WTC11 (cell line): ENCODE measurements at regions of chr11 and their contacts with region 1.

Region 1: GRCh38 chr11:7513234-7514098 is at the start of gene PPFIBP2:
- DNase-seq: peak; percentile 83
- ATAC-seq: peak; percentile 83
- H3K4me3 Mint-ChIP-seq: peak within 1 kb of the TSS; percentile 83
- H3K27ac Mint-ChIP-seq: peak within 1 kb of the TSS; percentile 63
- H3K4me1 Mint-ChIP-seq: peaks cover 41% of the 10 kb centered on the region
- H3K27me3 Mint-ChIP-seq: peaks cover 24% of the 10 kb centered on the region
- CTCF ChIP-seq: no peak
- total RNA-seq, gene PPFIBP2: 12.5 to 21.4 TPM (median 12.9 TPM) in 3 replicates

Region 2: GRCh38 chr11:7694235-7694634 is 180.8 kb after region 1 on chr11:
- CTCF ChIA-PET with region 1: interaction called, 14 read pairs
- POLR2A ChIA-PET with region 1: no interaction called
- DNase-seq: no peak
- ATAC-seq: no peak
- H3K4me3 Mint-ChIP-seq: no peak overlapping the region; the same call in 1 of the 2 replicates
- H3K27ac Mint-ChIP-seq: no peak overlapping the region
- H3K4me1 Mint-ChIP-seq: peaks cover 21% of the 10 kb centered on the region
- H3K27me3 Mint-ChIP-seq: peaks cover 9% of the 10 kb centered on the region
- CTCF ChIP-seq: no peak